Caco-2 (cell line): ENCODE measurements at regions of chr3 and their contacts with region 1.

Region 1: GRCh38 chr3:169863458-169863899 is 6.3 kb downstream of the LRRC31 start:
- DNase-seq: peak; percentile 57 to 71
- H3K4me3 ChIP-seq: no peak overlapping the region
- H3K4me3 Mint-ChIP-seq: no peak overlapping the region
- H3K27ac Mint-ChIP-seq: no peak overlapping the region
- H3K4me1 ChIP-seq: no peaks in the 10 kb centered on the region
- H3K4me1 Mint-ChIP-seq: no peaks in the 10 kb centered on the region
- H3K27me3 ChIP-seq: no peaks in the 10 kb centered on the region
- H3K27me3 Mint-ChIP-seq: no peaks in the 10 kb centered on the region
- CTCF ChIP-seq: peak; percentile 70 to 82

Region 2: GRCh38 chr3:170054204-170054603 is 190.7 kb after region 1 on chr3:
- CTCF ChIA-PET with region 1: no interaction called
- POLR2A ChIA-PET with region 1: no interaction called
- intact Hi-C with region 1: loop called (anchors 1 kb)
- DNase-seq: no peak
- H3K4me3 ChIP-seq: no peak overlapping the region
- H3K4me3 Mint-ChIP-seq: no peak overlapping the region
- H3K27ac Mint-ChIP-seq: no peak overlapping the region
- H3K4me1 ChIP-seq: no peaks in the 10 kb centered on the region
- H3K4me1 Mint-ChIP-seq: no peaks in the 10 kb centered on the region
- H3K27me3 ChIP-seq: no peaks in the 10 kb centered on the region
- H3K27me3 Mint-ChIP-seq: no peaks in the 10 kb centered on the region
- CTCF ChIP-seq: peak; percentile 26 to 45

Region 3: GRCh38 chr3:170531657-170532335 is 668.3 kb after region 1 on chr3:
- CTCF ChIA-PET with region 1: no interaction called
- POLR2A ChIA-PET with region 1: no interaction called
- intact Hi-C with region 1: no loop called
- DNase-seq: no peak
- H3K4me3 ChIP-seq: no peak overlapping the region
- H3K4me3 Mint-ChIP-seq: no peak overlapping the region
- H3K27ac Mint-ChIP-seq: no peak overlapping the region
- H3K4me1 ChIP-seq: no peaks in the 10 kb centered on the region
- H3K4me1 Mint-ChIP-seq: no peaks in the 10 kb centered on the region
- H3K27me3 ChIP-seq: peaks cover 2% of the 10 kb centered on the region; the same call in 1 of the 2 replicates
- H3K27me3 Mint-ChIP-seq: peaks cover 8% of the 10 kb centered on the region
- CTCF ChIP-seq: no peak